ENCODE measurements at regions of chr1 and their contacts with region 1.

Region 1: GRCh38 chr1:10507111-10507879 is 32.5 kb downstream of the PEX14 start:
- DNase-seq: peak; percentile 70
- H3K4me3 Mint-ChIP-seq: no peak overlapping the region
- H3K27ac Mint-ChIP-seq: no peak overlapping the region
- H3K4me1 Mint-ChIP-seq: peaks cover 40% of the 10 kb centered on the region
- H3K27me3 Mint-ChIP-seq: no peaks in the 10 kb centered on the region

Region 2: GRCh38 chr1:10472220-10473144 is 34.8 kb before region 1 on chr1 and contains the start of gene DFFA:
- CTCF ChIA-PET with region 1: no interaction called
- intact Hi-C with region 1: loop called (anchors 1 kb)
- DNase-seq: peak; percentile 97
- H3K4me3 Mint-ChIP-seq: peak within 1 kb of the TSS; percentile 90
- H3K27ac Mint-ChIP-seq: peak within 1 kb of the TSS; percentile 84
- H3K4me1 Mint-ChIP-seq: peaks cover 38% of the 10 kb centered on the region
- H3K27me3 Mint-ChIP-seq: no peaks in the 10 kb centered on the region
- total RNA-seq, gene DFFA: 34.2 to 36.1 TPM

Region 3: GRCh38 chr1:10522322-10522860 is 15.1 kb after region 1 on chr1:
- CTCF ChIA-PET with region 1: interaction called, 11 read pairs
- intact Hi-C with region 1: no loop called
- DNase-seq: no peak
- H3K4me3 Mint-ChIP-seq: no peak overlapping the region
- H3K27ac Mint-ChIP-seq: no peak overlapping the region
- H3K4me1 Mint-ChIP-seq: peaks cover 23% of the 10 kb centered on the region
- H3K27me3 Mint-ChIP-seq: no peaks in the 10 kb centered on the region

Region 4: GRCh38 chr1:10796019-10796944 is 289.0 kb after region 1 on chr1 and contains the start of gene CASZ1:
- CTCF ChIA-PET with region 1: no interaction called
- intact Hi-C with region 1: loop called (anchors 10 kb)
- DNase-seq: no peak
- H3K4me3 Mint-ChIP-seq: no peak within 1 kb of the TSS
- H3K27ac Mint-ChIP-seq: no peak within 1 kb of the TSS
- H3K4me1 Mint-ChIP-seq: peaks cover 16% of the 10 kb centered on the region
- H3K27me3 Mint-ChIP-seq: peaks cover 53% of the 10 kb centered on the region
- total RNA-seq, gene CASZ1: 1.7 to 2.0 TPM

Region 5: GRCh38 chr1:10932088-10932487 is 424.8 kb after region 1 on chr1:
- CTCF ChIA-PET with region 1: no interaction called
- intact Hi-C with region 1: loop called (anchors 2 kb)
- DNase-seq: peak; percentile 74
- H3K4me3 Mint-ChIP-seq: no peak overlapping the region
- H3K27ac Mint-ChIP-seq: no peak overlapping the region
- H3K4me1 Mint-ChIP-seq: peaks cover 6% of the 10 kb centered on the region
- H3K27me3 Mint-ChIP-seq: no peaks in the 10 kb centered on the region